Naive thymus-derived CD4-positive, alpha-beta T cell (primary cell): ENCODE measurements at regions of chr1 and their contacts with region 1.

Region 1: GRCh38 chr1:171741872-171742576 is at the start of gene VAMP4:
- DNase-seq: peak; percentile 78 to 90 (median 87)
- ATAC-seq: peak; percentile 90
- H3K4me3 ChIP-seq: peak within 1 kb of the TSS; percentile 95
- H3K4me3 Mint-ChIP-seq: peak within 1 kb of the TSS; percentile 97 to 100 (median 99)
- H3K27ac ChIP-seq: peak within 1 kb of the TSS; percentile 95
- H3K27ac Mint-ChIP-seq: peak within 1 kb of the TSS; percentile 98 to 100 (median 100)
- H3K4me1 ChIP-seq: peaks cover 30 to 34% of the 10 kb centered on the region in 2 donors
- H3K4me1 Mint-ChIP-seq: peaks cover 25 to 62% (median 57%) of the 10 kb centered on the region in 7 donors
- H3K27me3 ChIP-seq: no peaks in the 10 kb centered on the region
- H3K27me3 Mint-ChIP-seq: no peaks in the 10 kb centered on the region
- total RNA-seq, gene VAMP4: 16.2 to 27.2 (median 19.7) TPM

Region 2: GRCh38 chr1:170531758-170532657 is 1210.0 kb before region 1 on chr1 and contains the start of gene GORAB:
- CTCF ChIA-PET with region 1: no interaction called
- POLR2A ChIA-PET with region 1: no interaction called
- intact Hi-C with region 1: loop called in 1 of 2 experiments (anchors 5 kb)
- DNase-seq: peak; percentile 74 to 87 (median 83)
- ATAC-seq: peak; percentile 97
- H3K4me3 ChIP-seq: peak within 1 kb of the TSS; percentile 95
- H3K4me3 Mint-ChIP-seq: no peak within 1 kb of the TSS
- H3K27ac ChIP-seq: peak within 1 kb of the TSS; percentile 91
- H3K27ac Mint-ChIP-seq: peak within 1 kb of the TSS in 1 of 9 donors; percentile 36
- H3K4me1 ChIP-seq: peaks cover 8 to 14% of the 10 kb centered on the region in 2 donors
- H3K4me1 Mint-ChIP-seq: peaks cover 7 to 29% (median 19%) of the 10 kb centered on the region in 7 donors
- H3K27me3 ChIP-seq: no peaks in the 10 kb centered on the region
- H3K27me3 Mint-ChIP-seq: peaks cover 0 to 20% (median 0%) of the 10 kb centered on the region in 5 donors
- total RNA-seq, gene GORAB: 10.9 to 25.3 (median 22.7) TPM

Region 3: DNA sequence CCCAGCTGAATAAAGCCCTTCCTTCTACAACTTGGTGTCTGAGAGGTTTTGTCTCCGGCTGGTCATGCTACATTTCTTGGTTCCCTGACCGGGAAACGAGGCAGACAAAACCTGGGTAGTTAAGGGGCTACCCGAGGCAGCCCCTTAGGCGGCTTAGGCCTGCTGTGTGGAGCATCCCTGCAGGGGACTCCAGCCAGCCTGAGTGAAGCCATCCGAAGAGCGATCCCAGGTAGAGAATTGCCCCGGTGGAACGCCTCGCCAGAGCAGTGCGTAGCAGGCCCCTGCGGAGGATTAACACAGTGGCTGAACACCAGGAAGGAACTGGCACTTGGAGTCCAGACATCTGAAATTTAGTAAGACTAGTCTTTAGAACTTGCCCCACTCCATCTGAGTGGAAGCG is 141.2 kb before region 1 on chr1:
- CTCF ChIA-PET with region 1: no interaction called
- POLR2A ChIA-PET with region 1: no interaction called
- intact Hi-C with region 1: loop called in 1 of 2 experiments (anchors 5 kb)
- DNase-seq: no peak
- ATAC-seq: no peak
- H3K4me3 ChIP-seq: no peak overlapping the region
- H3K4me3 Mint-ChIP-seq: no peak overlapping the region
- H3K27ac ChIP-seq: no peak overlapping the region
- H3K27ac Mint-ChIP-seq: no peak overlapping the region
- H3K4me1 ChIP-seq: no peaks in the 10 kb centered on the region
- H3K4me1 Mint-ChIP-seq: peaks cover 0 to 1% (median 0%) of the 10 kb centered on the region in 7 donors
- H3K27me3 ChIP-seq: no peaks in the 10 kb centered on the region
- H3K27me3 Mint-ChIP-seq: no peaks in the 10 kb centered on the region

Region 4: GRCh38 chr1:171654942-171655745 is 86.9 kb before region 1 on chr1:
- CTCF ChIA-PET with region 1: interaction called, 3 read pairs
- POLR2A ChIA-PET with region 1: no interaction called
- intact Hi-C with region 1: loop called in 1 of 2 experiments (anchors 5 kb)
- DNase-seq: peak; percentile 24 to 76 (median 38)
- ATAC-seq: peak; percentile 78
- H3K4me3 ChIP-seq: peak overlapping the region; percentile 39
- H3K4me3 Mint-ChIP-seq: peak overlapping the region in 8 of 10 donors; percentile 3 to 72 (median 52)
- H3K27ac ChIP-seq: no peak overlapping the region
- H3K27ac Mint-ChIP-seq: peak overlapping the region in 1 of 9 donors; percentile 33
- H3K4me1 ChIP-seq: peaks cover 3 to 5% of the 10 kb centered on the region in 2 donors
- H3K4me1 Mint-ChIP-seq: peaks cover 9 to 12% (median 10%) of the 10 kb centered on the region in 7 donors
- H3K27me3 ChIP-seq: no peaks in the 10 kb centered on the region
- H3K27me3 Mint-ChIP-seq: peaks cover 0 to 34% (median 11%) of the 10 kb centered on the region in 5 donors

Region 5: GRCh38 chr1:171683870-171684269 is 58.2 kb before region 1 on chr1:
- CTCF ChIA-PET with region 1: no interaction called
- POLR2A ChIA-PET with region 1: no interaction called
- intact Hi-C with region 1: no loop called
- DNase-seq: no peak
- ATAC-seq: no peak
- H3K4me3 ChIP-seq: no peak overlapping the region
- H3K4me3 Mint-ChIP-seq: no peak overlapping the region
- H3K27ac ChIP-seq: no peak overlapping the region
- H3K27ac Mint-ChIP-seq: no peak overlapping the region
- H3K4me1 ChIP-seq: no peaks in the 10 kb centered on the region
- H3K4me1 Mint-ChIP-seq: peaks cover 0 to 2% (median 0%) of the 10 kb centered on the region in 7 donors
- H3K27me3 ChIP-seq: no peaks in the 10 kb centered on the region
- H3K27me3 Mint-ChIP-seq: peaks cover 0 to 6% (median 4%) of the 10 kb centered on the region in 5 donors

Region 6: DNA sequence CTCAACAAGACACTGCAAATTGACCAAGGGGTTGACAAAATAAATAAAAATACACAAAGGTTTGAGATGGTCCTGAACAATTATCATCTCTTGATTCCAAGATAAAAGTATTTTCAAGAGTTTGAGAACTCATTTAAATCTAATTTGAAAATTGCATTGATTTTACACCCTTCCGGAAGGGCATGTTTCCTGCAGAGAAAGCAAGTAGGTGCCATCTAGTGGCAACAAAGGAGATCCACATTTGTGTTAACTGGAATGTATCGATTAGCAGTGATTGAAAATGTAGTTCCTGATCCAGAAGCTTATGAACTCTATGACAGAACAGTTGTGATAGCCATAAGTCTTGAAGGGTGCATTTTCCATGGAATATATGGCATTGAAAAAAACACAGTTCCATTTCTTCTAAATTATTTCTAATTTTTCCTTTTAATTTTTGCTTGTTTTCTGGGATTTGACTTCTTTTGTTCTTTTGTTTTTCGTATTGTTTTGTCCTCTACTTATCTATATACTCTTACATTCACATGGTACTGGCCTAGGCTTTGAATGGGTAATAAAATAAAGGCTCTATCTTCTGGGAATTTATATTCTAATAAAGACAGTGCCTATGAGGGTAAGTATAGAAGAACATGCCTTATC is 242.9 kb after region 1 on chr1:
- CTCF ChIA-PET with region 1: interaction called, 3 read pairs
- POLR2A ChIA-PET with region 1: no interaction called
- intact Hi-C with region 1: loop called (anchors 1 to 2 kb)
- DNase-seq: peak in 7 of 9 donors; percentile 15 to 53 (median 39)
- ATAC-seq: peak; percentile 50
- H3K4me3 ChIP-seq: no peak overlapping the region
- H3K4me3 Mint-ChIP-seq: no peak overlapping the region
- H3K27ac ChIP-seq: no peak overlapping the region
- H3K27ac Mint-ChIP-seq: no peak overlapping the region
- H3K4me1 ChIP-seq: no peaks in the 10 kb centered on the region
- H3K4me1 Mint-ChIP-seq: peaks cover 0 to 3% (median 0%) of the 10 kb centered on the region in 7 donors
- H3K27me3 ChIP-seq: no peaks in the 10 kb centered on the region
- H3K27me3 Mint-ChIP-seq: peaks cover 0 to 17% (median 0%) of the 10 kb centered on the region in 5 donors

Region 7: GRCh38 chr1:172443626-172444453 is 701.8 kb after region 1 on chr1 and contains the start of gene PIGC:
- CTCF ChIA-PET with region 1: no interaction called
- POLR2A ChIA-PET with region 1: no interaction called
- intact Hi-C with region 1: loop called in 1 of 2 experiments (anchors 5 kb)
- DNase-seq: peak; percentile 78 to 89 (median 87)
- ATAC-seq: peak; percentile 100
- H3K4me3 ChIP-seq: peak within 1 kb of the TSS; percentile 72
- H3K4me3 Mint-ChIP-seq: peak within 1 kb of the TSS; percentile 87 to 98 (median 94)
- H3K27ac ChIP-seq: peak within 1 kb of the TSS; percentile 83
- H3K27ac Mint-ChIP-seq: peak within 1 kb of the TSS; percentile 91 to 97 (median 93)
- H3K4me1 ChIP-seq: peaks cover 15 to 25% of the 10 kb centered on the region in 2 donors
- H3K4me1 Mint-ChIP-seq: peaks cover 27 to 53% (median 47%) of the 10 kb centered on the region in 7 donors
- H3K27me3 ChIP-seq: no peaks in the 10 kb centered on the region
- H3K27me3 Mint-ChIP-seq: no peaks in the 10 kb centered on the region
- total RNA-seq, gene PIGC: 21.1 to 57.4 (median 25.1) TPM